Dendritic cell treated with granulocyte-macrophage colony-stimulating factor and Interleukin-4, amounts not matched to agents 40 ng/mL and 50 ng/mL, for 4 days (primary cell): ENCODE measurements at regions of chr19 and their contacts with region 1.

Region 1: GRCh38 chr19:21202865-21203494 is 61.1 kb downstream of the ZNF431 start:
- H3K4me3 Mint-ChIP-seq: no peak overlapping the region
- H3K27ac Mint-ChIP-seq: no peak overlapping the region
- H3K4me1 Mint-ChIP-seq: no peaks in the 10 kb centered on the region
- H3K27me3 Mint-ChIP-seq: no peaks in the 10 kb centered on the region

Region 2: GRCh38 chr19:21233691-21234090 is 30.7 kb after region 1 on chr19:
- intact Hi-C with region 1: no loop called
- H3K4me3 Mint-ChIP-seq: no peak overlapping the region
- H3K27ac Mint-ChIP-seq: no peak overlapping the region
- H3K4me1 Mint-ChIP-seq: no peaks in the 10 kb centered on the region
- H3K27me3 Mint-ChIP-seq: no peaks in the 10 kb centered on the region

Region 3: DNA sequence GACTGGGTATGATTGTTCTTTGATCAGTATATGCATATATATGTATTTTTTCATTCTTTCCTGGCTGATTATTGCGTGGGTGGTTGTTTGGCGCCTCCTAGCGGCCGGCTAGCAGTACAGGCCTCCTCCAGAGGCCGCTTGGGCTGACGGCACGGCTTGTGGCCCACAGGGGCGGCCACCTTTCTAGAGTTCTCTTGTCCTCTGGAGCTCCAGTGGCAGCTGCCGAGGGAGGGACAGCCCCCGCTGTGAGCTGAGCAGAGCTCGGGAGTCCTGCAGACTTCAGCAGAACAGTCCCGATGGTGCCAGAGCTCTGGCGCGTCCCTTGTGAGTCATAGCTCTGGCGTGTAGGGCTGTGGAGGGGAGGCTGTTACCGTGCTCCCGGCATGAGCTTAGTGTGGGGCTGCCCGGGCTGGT is 279.9 kb after region 1 on chr19:
- intact Hi-C with region 1: loop called (anchors 1 kb)
- H3K4me3 Mint-ChIP-seq: no peak overlapping the region
- H3K27ac Mint-ChIP-seq: no peak overlapping the region
- H3K4me1 Mint-ChIP-seq: no peaks in the 10 kb centered on the region
- H3K27me3 Mint-ChIP-seq: no peaks in the 10 kb centered on the region

Region 4: GRCh38 chr19:21698215-21698614 is 495.2 kb after region 1 on chr19:
- intact Hi-C with region 1: loop called (anchors 2 kb)
- H3K4me3 Mint-ChIP-seq: no peak overlapping the region
- H3K27ac Mint-ChIP-seq: no peak overlapping the region
- H3K4me1 Mint-ChIP-seq: no peaks in the 10 kb centered on the region
- H3K27me3 Mint-ChIP-seq: no peaks in the 10 kb centered on the region

Region 5: DNA sequence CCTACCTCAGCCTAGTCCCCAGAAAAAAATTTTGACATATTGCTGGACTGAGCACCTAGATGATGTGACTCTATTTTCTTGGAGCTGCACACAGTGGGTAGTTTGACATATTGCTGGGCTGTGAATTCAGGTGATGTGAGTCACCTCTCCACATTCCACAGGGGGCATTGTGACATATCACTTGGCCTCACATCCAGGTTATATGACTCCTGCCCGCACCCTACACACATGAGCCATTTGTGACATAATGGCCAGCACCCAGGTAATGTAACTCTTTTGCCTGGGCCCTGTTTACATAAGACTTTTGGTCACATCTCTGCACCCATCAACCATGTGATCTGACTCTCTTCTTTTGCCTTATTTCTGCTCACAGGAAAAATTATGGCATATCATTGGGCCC is 688.1 kb after region 1 on chr19:
- intact Hi-C with region 1: loop called (anchors 2 kb)
- H3K4me3 Mint-ChIP-seq: no peak overlapping the region
- H3K27ac Mint-ChIP-seq: no peak overlapping the region
- H3K4me1 Mint-ChIP-seq: no peaks in the 10 kb centered on the region
- H3K27me3 Mint-ChIP-seq: peaks cover 1% of the 10 kb centered on the region